ENCODE measurements at regions of chr10 and their contacts with region 1.

Region 1: DNA sequence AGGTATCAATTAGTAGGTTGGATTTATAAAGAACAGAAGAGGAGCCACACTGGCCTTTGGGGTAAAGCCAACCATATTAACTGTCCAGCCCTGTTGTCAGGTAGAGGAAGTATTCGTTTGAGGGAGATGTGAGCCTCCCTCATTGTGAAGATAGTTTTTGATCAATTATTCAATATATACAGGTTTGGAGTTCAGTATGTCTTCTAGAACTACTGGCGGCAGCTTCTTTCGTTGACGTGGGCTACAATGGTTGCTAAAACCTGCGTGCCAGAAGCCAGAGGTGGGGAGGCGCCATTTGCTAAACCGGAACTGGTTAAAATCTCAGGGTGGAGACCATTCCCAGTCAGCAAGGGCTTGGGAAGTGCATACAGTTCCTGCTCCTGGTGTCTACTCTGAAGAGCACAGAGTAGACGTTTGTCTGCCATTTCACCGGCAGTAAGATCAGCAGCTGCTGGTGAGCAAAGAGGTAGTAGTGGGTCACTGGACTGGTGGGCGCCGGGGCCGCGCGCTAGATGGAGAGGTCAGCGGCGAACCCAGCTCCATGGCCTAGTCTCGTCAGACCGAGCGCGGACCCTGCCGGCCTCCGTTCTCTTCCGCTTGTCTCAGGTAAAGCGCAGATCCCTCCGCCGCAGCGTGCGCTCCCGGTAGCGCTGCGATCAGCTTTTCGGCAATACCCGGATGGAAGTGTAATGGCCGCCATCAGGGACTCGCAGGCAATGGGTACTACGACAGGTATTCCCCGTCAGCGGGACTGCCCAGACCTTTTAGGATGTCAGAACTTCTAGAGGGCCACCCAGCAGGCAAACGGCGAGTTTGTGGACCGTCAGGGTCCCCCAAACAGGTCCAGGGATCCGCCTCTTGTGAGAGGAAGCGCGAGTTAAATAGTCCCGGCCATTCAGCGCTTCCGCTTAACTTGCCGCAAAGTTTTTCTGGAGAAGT is at the start of gene ZNF518A:
- DNase-seq: peak; percentile 87 to 100
- ATAC-seq: peak; percentile 93 to 96
- H3K4me3 ChIP-seq: peak within 1 kb of the TSS; percentile 86
- H3K27ac ChIP-seq: peak within 1 kb of the TSS; percentile 99
- H3K4me1 ChIP-seq: peaks cover 21% of the 10 kb centered on the region
- CTCF ChIP-seq: no peak
- EP300 ChIP-seq: no peak
- POLR2A ChIP-seq: peak; percentile 80
- RAD21 ChIP-seq: no peak; a peak in 1 of 5 replicates
- polyA plus RNA-seq, gene ZNF518A: 21.7 and 28.9 TPM in 2 replicates

Region 2: GRCh38 chr10:96043033-96043932 is 86.4 kb before region 1 on chr10 and contains the start of gene CCNJ:
- CTCF ChIA-PET with region 1: interaction called, 5 read pairs
- POLR2A ChIA-PET with region 1: interaction called, 14 read pairs
- DNase-seq: peak; percentile 91 to 93
- ATAC-seq: peak; percentile 95 to 96
- H3K4me3 ChIP-seq: peak within 1 kb of the TSS; percentile 87
- H3K27ac ChIP-seq: peak within 1 kb of the TSS; percentile 91 to 94
- H3K4me1 ChIP-seq: peaks cover 8% of the 10 kb centered on the region; the same call in 1 of the 3 replicates
- CTCF ChIP-seq: no peak; the same call in 2 of the 3 replicates
- EP300 ChIP-seq: no peak
- POLR2A ChIP-seq: peak; percentile 75
- RAD21 ChIP-seq: no peak; a peak in 1 of 5 replicates
- polyA plus RNA-seq, gene CCNJ: 12.0 and 14.0 TPM in 2 replicates

Region 3: GRCh38 chr10:96082153-96082552 is 47.5 kb before region 1 on chr10:
- CTCF ChIA-PET with region 1: no interaction called
- POLR2A ChIA-PET with region 1: interaction called, 12 read pairs
- DNase-seq: no peak
- ATAC-seq: no peak
- H3K4me3 ChIP-seq: no peak overlapping the region
- H3K27ac ChIP-seq: no peak overlapping the region
- H3K4me1 ChIP-seq: no peaks in the 10 kb centered on the region
- CTCF ChIP-seq: no peak
- EP300 ChIP-seq: no peak
- POLR2A ChIP-seq: no peak
- RAD21 ChIP-seq: no peak

Region 4: DNA sequence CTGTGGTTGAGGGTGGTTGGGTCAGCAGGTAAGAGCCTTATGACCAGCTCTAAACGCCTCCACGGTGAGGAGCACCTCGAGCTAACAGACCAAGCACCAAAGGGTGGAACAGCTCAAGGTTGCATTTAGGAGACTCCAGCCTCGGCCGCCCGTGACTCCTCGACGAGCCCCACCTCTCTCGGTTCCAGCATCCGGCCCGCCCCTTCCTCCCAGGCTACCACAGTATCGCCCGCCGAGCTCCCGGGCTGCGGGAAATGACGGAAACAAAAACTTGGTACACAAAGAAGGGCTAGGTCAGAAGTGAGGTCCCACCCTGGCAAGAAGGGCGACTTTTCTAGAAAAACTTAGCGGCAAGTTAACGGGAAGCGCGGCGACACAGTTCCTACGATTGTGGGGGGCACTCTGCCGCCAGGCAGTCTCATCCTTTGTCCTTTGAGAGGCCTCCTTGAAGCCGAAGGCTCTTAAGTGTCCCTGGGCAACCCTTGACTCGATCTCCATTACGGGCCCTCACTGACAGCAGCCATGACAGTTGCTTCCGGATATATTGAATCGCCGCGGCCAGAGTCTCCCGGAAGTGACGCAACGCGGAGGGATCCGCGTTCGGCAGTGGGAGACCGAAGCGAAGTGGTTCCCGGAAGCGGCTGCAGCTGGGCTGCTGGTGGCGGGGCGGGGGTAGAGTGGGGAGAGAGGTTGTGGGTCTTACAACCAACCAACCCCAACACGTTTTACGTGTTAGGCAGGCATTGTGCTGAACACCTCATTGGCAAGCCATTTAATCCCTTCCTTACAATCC is 39.8 kb before region 1 on chr10:
- CTCF ChIA-PET with region 1: interaction called, 4 read pairs
- POLR2A ChIA-PET with region 1: interaction called, 146 read pairs
- DNase-seq: peak; percentile 91 to 98
- ATAC-seq: peak; percentile 98
- H3K4me3 ChIP-seq: peak overlapping the region; percentile 77
- H3K27ac ChIP-seq: peak overlapping the region; percentile 94 to 98
- H3K4me1 ChIP-seq: peaks cover 8% of the 10 kb centered on the region; the same call in 1 of the 3 replicates
- CTCF ChIP-seq: no peak
- EP300 ChIP-seq: no peak
- POLR2A ChIP-seq: peak; percentile 68
- RAD21 ChIP-seq: no peak

Region 5: GRCh38 chr10:96107623-96108038 is 22.0 kb before region 1 on chr10:
- CTCF ChIA-PET with region 1: no interaction called
- POLR2A ChIA-PET with region 1: no interaction called
- DNase-seq: no peak
- ATAC-seq: no peak
- H3K4me3 ChIP-seq: no peak overlapping the region
- H3K27ac ChIP-seq: no peak overlapping the region
- H3K4me1 ChIP-seq: no peaks in the 10 kb centered on the region
- CTCF ChIP-seq: no peak
- EP300 ChIP-seq: no peak
- POLR2A ChIP-seq: no peak
- RAD21 ChIP-seq: no peak

Region 6: DNA sequence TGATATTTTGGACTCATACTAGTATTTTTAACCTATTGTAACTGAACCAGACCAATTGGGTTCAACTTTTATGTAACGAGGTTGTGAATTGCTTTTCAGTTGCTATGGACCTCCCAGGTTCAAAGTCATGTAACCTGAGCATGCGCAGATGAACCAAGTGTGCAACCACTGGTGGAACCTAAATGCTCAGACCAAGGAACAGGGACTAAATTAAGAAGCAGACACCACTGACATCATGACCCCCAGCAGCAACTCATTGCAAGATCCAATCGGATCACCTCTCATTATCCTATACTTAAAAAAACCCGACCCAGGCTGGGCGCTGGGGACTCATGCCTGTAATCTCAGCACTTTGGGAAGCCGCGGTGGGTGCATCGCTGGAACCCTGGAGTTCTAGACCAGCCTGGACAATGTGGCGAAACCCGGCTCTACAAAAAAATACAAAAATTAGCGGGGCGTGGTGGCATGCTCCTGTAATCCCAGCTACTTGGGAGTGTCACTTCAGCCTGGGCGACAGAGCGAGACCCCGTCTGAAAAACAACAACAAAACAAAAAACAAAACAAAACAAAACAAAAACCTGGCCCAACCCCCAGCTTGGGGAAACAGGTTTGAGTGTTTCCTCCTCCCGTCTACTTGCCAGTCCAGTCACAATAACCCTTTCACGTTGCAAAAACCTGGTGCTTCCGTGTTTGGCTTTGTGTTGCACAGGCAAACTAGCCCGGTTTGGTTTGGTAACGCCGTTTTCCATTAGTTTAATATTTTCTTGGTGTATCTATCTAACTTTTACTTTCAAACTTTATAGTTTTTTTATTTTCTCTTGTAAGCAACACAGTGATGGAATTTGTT is 10.8 kb before region 1 on chr10:
- CTCF ChIA-PET with region 1: interaction called, 4 read pairs
- POLR2A ChIA-PET with region 1: interaction called, 15 read pairs
- DNase-seq: peak; percentile 72 to 94
- ATAC-seq: peak; percentile 96
- H3K4me3 ChIP-seq: peak overlapping the region; percentile 50
- H3K27ac ChIP-seq: peak overlapping the region; percentile 68 to 83
- H3K4me1 ChIP-seq: peaks cover 3% of the 10 kb centered on the region; the same call in 1 of the 3 replicates
- CTCF ChIP-seq: no peak
- EP300 ChIP-seq: no peak
- POLR2A ChIP-seq: no peak
- RAD21 ChIP-seq: no peak

Measured in A549 (cell line).